HEK293 (cell line): ENCODE measurements at regions of chr4 and their contacts with region 1.

Region 1: GRCh38 chr4:21469438-21470300 is 478.9 kb downstream of the KCNIP4 start:
- H3K4me3 ChIP-seq: no peak overlapping the region
- H3K27ac ChIP-seq: no peak overlapping the region
- H3K4me1 ChIP-seq: no peaks in the 10 kb centered on the region
- CTCF ChIP-seq: no peak

Region 2: GRCh38 chr4:21184788-21185187 is 284.9 kb before region 1 on chr4:
- CTCF ChIA-PET with region 1: interaction called, 20 read pairs
- POLR2A ChIA-PET with region 1: no interaction called
- H3K4me3 ChIP-seq: no peak overlapping the region
- H3K27ac ChIP-seq: no peak overlapping the region
- H3K4me1 ChIP-seq: no peaks in the 10 kb centered on the region
- CTCF ChIP-seq: no peak

Region 3: DNA sequence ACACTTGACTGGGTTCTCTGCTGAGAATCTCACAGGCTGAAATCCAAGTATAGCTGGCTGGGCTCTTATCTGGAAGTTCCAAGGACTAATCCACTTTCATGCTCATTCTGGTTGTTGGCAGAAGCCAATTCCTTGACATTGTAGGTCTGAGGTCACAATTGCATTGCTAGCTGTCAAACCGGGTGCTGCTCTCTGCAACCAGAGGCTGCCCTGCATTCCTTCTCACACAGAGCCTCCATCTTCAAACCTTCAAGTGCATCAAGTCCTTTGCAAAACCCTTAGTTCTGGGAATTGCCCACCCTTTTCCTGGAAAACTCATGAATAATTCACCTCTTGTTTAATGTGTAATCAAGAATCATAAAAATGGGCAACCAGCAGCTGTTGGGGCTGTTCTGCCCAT is 74.7 kb after region 1 on chr4:
- CTCF ChIA-PET with region 1: no interaction called
- POLR2A ChIA-PET with region 1: no interaction called
- H3K4me3 ChIP-seq: no peak overlapping the region
- H3K27ac ChIP-seq: no peak overlapping the region
- H3K4me1 ChIP-seq: no peaks in the 10 kb centered on the region
- CTCF ChIP-seq: no peak